Activated T-helper 1 cell treated with anti-CD3 and anti-CD28 coated beads, Interleukin-12 subunit alpha, Interleukin-12 subunit beta, Interleukin-2, Interleukin-4 antibody, amounts not matched to agents 30 ng/mL and 10 ng/mL and 1 ng/mL, durations not matched to agents 14 hours and 24 hours and 36 hours (primary cell): ENCODE measurements at regions of chr7 and their contacts with region 1.

Region 1: GRCh38 chr7:101217388-101218235 is at the starts of genes PLOD3 and ZNHIT1:
- DNase-seq: peak; percentile 92
- H3K4me3 Mint-ChIP-seq: peak within 1 kb of the TSS; percentile 99
- H3K27ac Mint-ChIP-seq: peak within 1 kb of the TSS; percentile 92
- H3K4me1 Mint-ChIP-seq: peaks cover 35% of the 10 kb centered on the region
- H3K27me3 Mint-ChIP-seq: no peaks in the 10 kb centered on the region
- total RNA-seq, gene PLOD3: 65.2 and 68.9 TPM in 2 replicates
- total RNA-seq, gene ZNHIT1: 49.7 and 53.4 TPM in 2 replicates

Region 2: DNA sequence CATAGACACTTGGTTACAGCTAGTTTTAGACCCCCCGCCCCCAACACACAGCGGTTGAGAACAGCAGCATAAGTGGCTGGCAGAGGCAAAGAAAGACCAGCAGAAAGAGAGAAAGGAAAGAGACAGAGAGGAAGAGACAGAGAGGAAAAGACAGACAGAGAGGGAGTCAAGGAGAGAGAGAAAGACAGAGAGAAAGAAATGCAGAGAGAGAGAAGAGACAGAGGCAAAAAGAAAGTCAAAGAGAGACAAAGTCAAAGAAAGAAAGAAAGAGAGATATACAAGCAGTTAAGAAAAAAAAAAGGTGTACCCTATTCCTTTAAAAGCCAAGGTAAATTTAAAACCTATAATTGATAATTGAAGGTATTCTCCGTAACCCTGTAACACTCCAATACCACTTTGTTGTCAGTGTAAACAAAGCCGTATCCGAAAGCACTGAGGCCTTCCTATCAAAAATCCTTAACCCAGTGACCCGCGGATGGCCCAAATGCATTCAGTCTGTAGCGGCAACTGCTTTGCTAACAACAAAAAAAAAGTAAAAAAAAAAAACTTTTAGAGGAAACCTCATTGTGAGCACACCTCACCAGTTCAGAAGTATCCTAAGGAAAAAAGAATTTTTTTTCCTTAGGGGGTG is 377.0 kb before region 1 on chr7:
- intact Hi-C with region 1: no loop called
- DNase-seq: no peak
- H3K4me3 Mint-ChIP-seq: no peak overlapping the region
- H3K27ac Mint-ChIP-seq: no peak overlapping the region
- H3K4me1 Mint-ChIP-seq: no peaks in the 10 kb centered on the region
- H3K27me3 Mint-ChIP-seq: peaks cover 3% of the 10 kb centered on the region

Region 3: DNA sequence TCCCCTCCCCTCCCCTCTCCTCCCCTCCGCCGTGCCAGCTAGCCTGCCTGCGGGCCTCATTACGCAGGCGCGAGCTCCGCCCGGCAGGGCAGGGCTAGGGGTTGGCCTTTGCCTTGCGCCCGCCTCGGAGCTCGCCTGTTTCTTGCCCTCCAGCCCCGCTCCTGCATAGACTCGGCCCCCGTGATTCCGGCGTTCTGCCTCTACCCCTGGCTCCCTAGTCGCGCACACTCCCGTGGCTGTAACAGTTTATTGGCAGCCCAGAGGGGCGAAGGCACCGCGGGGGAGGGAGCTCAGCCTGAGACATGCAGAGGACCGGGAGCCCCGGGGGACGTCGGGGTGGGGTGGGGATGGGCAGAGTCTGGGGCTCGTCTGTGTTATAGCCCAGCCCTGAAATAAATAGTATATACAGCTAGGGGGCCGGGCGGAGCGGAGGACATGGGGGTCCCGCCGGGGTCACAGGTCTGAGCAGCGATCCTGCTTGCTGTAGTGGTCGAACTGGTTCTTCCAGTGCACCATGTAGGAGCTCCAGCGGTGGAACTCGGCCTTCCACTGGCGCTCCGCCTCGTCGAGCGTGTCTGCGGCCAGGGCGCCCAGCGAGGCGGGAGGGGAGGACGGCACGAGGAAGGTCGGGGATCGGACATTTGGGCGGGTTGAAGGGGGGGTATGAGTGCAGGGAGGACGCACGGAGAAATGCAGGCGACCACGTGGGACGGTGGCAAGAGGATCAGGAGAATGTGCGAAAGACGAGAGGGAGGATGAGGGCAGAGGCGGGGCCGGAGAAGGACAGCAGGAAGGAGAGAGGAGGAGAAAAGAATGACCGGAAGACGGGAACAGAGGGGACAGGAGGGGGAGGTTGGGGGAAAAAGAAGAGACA is 327.6 kb before region 1 on chr7:
- intact Hi-C with region 1: loop called (anchors 1 kb)
- DNase-seq: peak; percentile 91
- H3K4me3 Mint-ChIP-seq: peak overlapping the region; percentile 82
- H3K27ac Mint-ChIP-seq: peak overlapping the region; percentile 67
- H3K4me1 Mint-ChIP-seq: peaks cover 42% of the 10 kb centered on the region
- H3K27me3 Mint-ChIP-seq: peaks cover 23% of the 10 kb centered on the region

Region 4: DNA sequence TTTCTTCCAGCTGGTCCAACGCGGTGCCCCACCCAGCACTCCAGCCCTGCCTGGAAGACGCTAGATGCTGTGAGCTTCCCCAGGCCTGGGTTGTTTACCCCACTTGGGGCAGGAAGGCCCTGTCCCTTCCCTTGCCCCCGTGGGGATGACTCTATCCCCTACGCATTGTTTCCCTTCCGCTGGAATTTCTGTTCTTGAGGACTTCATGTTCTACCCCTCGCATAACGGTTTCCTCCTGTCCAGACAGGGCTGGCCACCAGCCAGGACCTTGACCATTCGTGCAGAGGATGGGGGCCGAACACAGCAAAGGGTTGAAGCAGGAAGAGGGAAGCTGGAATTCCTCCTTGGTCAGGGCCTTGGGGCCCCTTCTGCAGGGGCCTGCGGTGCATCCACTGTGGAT is 105.4 kb before region 1 on chr7:
- intact Hi-C with region 1: no loop called
- DNase-seq: no peak
- H3K4me3 Mint-ChIP-seq: no peak overlapping the region
- H3K27ac Mint-ChIP-seq: no peak overlapping the region
- H3K4me1 Mint-ChIP-seq: no peaks in the 10 kb centered on the region
- H3K27me3 Mint-ChIP-seq: peaks cover 5% of the 10 kb centered on the region

Region 5: GRCh38 chr7:101138213-101138870 is 79.3 kb before region 1 on chr7:
- intact Hi-C with region 1: loop called (anchors 1 kb)
- DNase-seq: peak; percentile 64
- H3K4me3 Mint-ChIP-seq: peak overlapping the region; percentile 67
- H3K27ac Mint-ChIP-seq: peak overlapping the region; percentile 79
- H3K4me1 Mint-ChIP-seq: peaks cover 57% of the 10 kb centered on the region
- H3K27me3 Mint-ChIP-seq: peaks cover 28% of the 10 kb centered on the region

Region 6: DNA sequence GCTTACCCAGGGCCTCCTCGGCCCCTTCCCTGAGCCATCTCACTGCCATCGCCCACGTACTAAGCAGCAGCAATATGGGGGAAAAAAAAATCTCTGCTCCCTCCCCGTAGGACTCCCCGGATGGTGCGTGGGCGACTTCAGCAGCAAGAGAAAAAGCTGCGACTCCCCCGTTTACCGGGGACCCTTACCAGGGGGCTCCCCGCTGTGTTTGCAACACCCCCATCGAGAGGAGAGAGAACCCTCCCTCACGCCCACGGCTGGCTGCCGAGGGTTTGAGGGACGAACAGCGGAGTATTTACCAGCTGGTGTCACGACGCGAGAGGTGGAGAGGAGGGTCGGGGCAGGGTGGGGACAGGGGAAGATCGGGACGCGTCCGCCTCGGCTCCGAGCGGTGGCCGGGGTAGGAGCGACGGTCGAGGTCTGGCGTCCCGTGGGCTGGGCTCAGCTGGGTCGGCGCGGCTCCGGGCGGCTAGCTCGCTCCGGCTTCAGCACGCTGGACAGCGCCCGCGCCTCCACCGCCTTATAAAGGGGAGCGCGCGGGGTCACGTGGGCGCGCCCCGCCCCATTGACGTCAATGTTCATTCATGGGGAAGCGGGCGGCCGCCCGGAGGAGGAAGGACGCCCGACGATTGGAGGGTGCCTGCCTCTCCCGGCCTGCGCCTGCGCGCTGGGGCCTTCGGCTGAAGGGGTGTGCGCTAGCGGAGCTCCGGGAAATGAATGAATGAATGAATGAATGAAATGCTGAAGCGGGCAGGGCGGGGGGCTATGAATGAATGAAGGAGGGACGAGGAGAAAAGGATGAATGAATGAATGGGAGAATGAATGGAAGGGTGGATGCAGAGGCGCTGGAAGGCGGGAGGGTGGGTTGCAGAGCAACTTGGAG is 52.3 kb before region 1 on chr7 and contains the start of gene VGF:
- intact Hi-C with region 1: no loop called
- DNase-seq: peak; percentile 92
- H3K4me3 Mint-ChIP-seq: peak within 1 kb of the TSS; percentile 85
- H3K27ac Mint-ChIP-seq: peak within 1 kb of the TSS; percentile 82
- H3K4me1 Mint-ChIP-seq: peaks cover 52% of the 10 kb centered on the region
- H3K27me3 Mint-ChIP-seq: peaks cover 61% of the 10 kb centered on the region
- total RNA-seq, gene VGF: 0.10 and 0.21 TPM in 2 replicates

Region 7: GRCh38 chr7:101244375-101245146 is 26.9 kb after region 1 on chr7 and contains the start of gene FIS1:
- intact Hi-C with region 1: loop called (anchors 1 kb)
- DNase-seq: peak; percentile 91
- H3K4me3 Mint-ChIP-seq: peak within 1 kb of the TSS; percentile 94
- H3K27ac Mint-ChIP-seq: peak within 1 kb of the TSS; percentile 98
- H3K4me1 Mint-ChIP-seq: peaks cover 24% of the 10 kb centered on the region
- H3K27me3 Mint-ChIP-seq: no peaks in the 10 kb centered on the region
- total RNA-seq, gene FIS1: 138 and 143 TPM in 2 replicates

Region 8: GRCh38 chr7:101287032-101287431 is 69.4 kb after region 1 on chr7:
- intact Hi-C with region 1: no loop called
- DNase-seq: no peak
- H3K4me3 Mint-ChIP-seq: no peak overlapping the region
- H3K27ac Mint-ChIP-seq: no peak overlapping the region
- H3K4me1 Mint-ChIP-seq: peaks cover 21% of the 10 kb centered on the region
- H3K27me3 Mint-ChIP-seq: peaks cover 24% of the 10 kb centered on the region

Region 9: DNA sequence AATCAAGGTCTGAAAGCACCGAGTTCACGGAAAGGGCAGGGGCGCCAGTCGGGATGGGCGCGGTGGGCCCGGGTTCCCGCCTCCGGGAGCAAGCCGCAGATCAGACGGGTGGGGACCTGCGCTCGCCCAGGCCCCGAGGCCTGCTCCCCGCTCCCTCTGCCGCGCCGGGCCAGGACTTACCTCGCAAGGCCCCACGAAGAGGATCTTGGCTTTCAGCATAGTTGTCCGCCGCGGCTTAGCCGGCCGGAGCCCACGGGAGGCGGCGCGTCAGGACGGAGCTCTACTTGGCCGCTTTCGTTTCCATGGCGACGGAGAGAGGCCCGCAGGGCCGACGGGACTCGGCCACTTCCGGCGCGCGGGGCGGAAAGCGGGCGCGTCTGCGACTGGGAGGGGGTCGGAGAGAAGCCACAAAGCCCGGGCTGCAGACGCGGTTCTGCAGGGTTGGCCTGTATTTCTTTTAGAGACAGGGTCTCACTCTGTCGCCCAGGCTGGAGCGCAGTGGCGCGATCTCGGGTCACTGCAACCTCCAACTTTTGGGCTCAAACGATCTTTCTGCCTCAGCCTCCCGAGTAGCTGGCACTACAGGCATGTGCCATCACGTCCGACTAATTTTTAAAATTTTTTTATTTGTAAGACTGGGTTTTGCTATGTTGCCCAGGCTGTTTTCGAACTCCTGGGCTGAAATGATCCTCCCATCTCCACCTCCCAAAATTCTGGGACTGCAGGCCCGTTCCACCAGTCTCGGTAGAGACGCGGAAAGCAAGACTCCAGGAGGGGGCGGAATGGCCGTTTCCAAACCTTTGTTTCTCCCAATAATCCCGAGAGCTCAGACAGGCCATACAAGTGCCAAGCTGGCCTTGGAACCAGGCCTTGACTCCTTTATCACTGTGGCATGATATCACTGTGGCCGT is 104.1 kb after region 1 on chr7 and contains the start of gene IFT22:
- intact Hi-C with region 1: loop called (anchors 1 kb)
- DNase-seq: peak; percentile 85
- H3K4me3 Mint-ChIP-seq: peak within 1 kb of the TSS; percentile 88
- H3K27ac Mint-ChIP-seq: peak within 1 kb of the TSS; percentile 88
- H3K4me1 Mint-ChIP-seq: no peaks in the 10 kb centered on the region
- H3K27me3 Mint-ChIP-seq: peaks cover 10% of the 10 kb centered on the region
- total RNA-seq, gene IFT22: 4.4 and 5.5 TPM in 2 replicates